Gastrocnemius medialis (tissue), 4 donors: ENCODE measurements at regions of chr16 and their contacts with region 1.

Region 1: DNA sequence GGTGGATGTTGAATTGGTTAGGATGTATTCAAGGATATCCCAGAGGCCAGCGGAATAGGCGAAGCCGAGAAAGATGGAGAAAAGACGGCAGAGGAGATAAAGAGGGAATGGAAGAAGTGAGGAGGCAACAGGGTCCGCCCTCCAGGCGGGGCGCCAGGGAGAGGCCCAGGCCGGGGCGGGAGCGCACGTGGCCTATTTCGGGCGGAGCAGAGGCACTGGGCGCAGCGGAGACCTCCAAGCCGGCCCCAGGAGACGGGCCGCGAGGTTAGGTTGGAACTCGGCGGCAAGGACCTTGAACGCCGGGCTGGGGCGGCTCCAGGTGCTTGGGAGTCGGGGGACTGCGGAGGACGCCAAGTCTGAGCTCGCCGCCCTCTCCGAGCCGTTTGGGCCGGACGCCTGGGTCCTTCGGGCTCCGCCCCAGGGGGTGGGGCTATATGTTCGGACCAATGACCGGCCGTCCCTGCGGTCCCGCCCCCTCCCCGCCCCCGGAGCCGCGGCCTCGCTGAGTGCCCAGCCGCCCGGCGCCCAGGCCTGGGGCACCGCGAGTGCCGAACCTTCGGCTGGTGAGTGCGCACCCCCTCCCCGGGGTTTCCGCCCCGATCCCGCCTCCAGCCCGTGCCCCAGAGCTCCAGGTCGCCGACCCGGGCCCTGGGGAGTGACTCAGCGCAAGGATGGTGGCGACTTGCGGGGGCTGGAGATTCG is at the start of gene ZNF771:
- DNase-seq: peak; percentile 84 to 90
- ATAC-seq: peak; percentile 91
- H3K4me3 ChIP-seq: peak within 1 kb of the TSS; percentile 59 to 98 (median 85)
- H3K27ac ChIP-seq: peak within 1 kb of the TSS; percentile 92 to 98 (median 94)
- H3K4me1 ChIP-seq: peaks cover 23 to 28% of the 10 kb centered on the region in 2 donors
- H3K27me3 ChIP-seq: no peaks in the 10 kb centered on the region
- CTCF ChIP-seq: no peak
- POLR2A ChIP-seq: peak; percentile 83 to 85
- total RNA-seq, gene ZNF771: 16.7 to 34.1 (median 24.7) TPM

Region 2: GRCh38 chr16:30112197-30113030 is 294.8 kb before region 1 on chr16:
- in situ Hi-C with region 1: loop called in 1 of 4 experiments (anchors 25 kb)
- intact Hi-C with region 1: no loop called
- DNase-seq: peak in 1 of 2 donors; percentile 32
- ATAC-seq: no peak
- H3K4me3 ChIP-seq: no peak overlapping the region
- H3K27ac ChIP-seq: no peak overlapping the region
- H3K4me1 ChIP-seq: no peaks in the 10 kb centered on the region
- H3K27me3 ChIP-seq: no peaks in the 10 kb centered on the region
- CTCF ChIP-seq: peak in 4 of 5 experiments; percentile 53 to 62 (median 58)
- POLR2A ChIP-seq: no peak

Region 3: DNA sequence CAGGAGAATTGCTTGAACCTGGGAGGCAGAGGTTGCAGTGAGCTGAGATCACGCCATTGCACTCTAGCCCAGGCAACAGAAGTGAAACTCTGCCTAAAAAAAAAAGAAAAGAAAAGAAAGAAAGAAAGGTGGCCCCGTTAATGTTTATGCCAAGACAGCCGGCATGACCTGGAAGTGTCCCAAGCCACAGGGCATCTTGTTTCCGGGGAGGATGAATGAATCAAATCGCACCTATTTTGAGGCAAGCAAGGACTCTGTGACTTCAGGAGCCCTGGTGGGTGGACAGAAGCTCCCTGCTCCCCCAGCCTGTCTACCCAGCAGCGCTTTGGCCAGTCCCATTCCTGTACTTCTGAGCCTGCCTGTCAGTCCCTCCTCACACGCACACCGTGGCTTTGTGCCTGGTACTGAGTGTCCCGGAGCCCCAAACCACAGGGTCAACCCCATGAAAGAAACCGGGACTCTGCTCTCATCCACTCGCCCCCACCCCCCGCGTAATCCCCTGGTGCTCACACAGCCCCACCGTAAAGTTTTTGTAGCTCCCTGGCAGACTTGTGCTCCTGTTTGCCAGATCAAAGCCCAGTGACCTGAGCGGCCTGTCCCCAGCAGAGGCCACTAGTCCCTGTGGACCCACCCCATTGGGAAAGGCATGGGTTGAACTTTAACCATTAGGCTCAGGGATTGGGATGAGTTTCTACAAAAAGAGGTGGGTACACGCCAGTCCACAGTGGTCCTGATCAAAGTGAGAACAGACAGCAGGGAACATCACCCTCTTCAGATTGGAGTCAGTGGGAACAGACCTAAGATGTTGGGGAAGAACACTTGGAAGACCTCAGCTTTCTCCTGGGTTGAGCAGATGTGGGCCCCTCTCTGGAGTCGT is 71.4 kb before region 1 on chr16:
- in situ Hi-C with region 1: no loop called
- intact Hi-C with region 1: loop called (anchors 2 kb)
- DNase-seq: peak; percentile 64 to 75
- ATAC-seq: peak; percentile 52 to 67
- H3K4me3 ChIP-seq: peak overlapping the region; percentile 66 to 85 (median 77)
- H3K27ac ChIP-seq: peak overlapping the region; percentile 89 to 99 (median 96)
- H3K4me1 ChIP-seq: peaks cover 5 to 32% of the 10 kb centered on the region in 2 donors
- H3K27me3 ChIP-seq: no peaks in the 10 kb centered on the region
- CTCF ChIP-seq: no peak
- POLR2A ChIP-seq: no peak

Region 4: DNA sequence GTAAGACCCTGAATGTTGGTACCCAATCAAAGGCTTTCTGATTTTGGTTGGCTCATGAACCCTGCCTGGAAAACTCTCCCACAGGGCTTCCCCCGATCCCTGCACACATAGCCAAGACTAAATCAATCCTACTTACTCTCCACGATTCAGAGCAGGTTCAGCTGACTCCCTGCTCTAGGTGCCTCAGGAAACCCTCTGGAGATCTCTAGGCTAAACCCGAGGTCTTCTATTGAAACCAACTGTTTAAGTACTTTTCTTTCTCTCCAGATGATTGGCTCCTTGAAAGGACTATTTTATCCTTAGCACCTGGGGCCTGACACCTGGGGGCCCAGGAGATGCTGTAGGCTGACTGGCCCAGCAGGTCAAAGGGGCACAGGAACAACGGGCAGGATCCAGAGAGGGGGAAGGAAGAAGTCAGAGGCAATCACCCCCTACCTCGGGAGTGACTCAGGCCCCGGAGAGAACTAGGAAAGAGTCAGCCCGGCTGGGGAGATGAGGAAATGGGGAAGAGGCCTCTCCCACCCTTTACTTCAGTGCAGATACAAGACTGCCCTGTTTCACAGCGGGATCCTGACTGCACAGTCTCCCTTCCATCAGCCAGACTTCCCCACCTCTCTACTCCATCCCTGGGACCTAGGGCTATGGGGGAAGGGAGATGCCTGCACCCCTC is 39.0 kb before region 1 on chr16:
- in situ Hi-C with region 1: no loop called
- intact Hi-C with region 1: no loop called
- DNase-seq: no peak
- ATAC-seq: no peak
- H3K4me3 ChIP-seq: peak overlapping the region; percentile 65 to 78 (median 74)
- H3K27ac ChIP-seq: peak overlapping the region; percentile 79 to 88 (median 88)
- H3K4me1 ChIP-seq: peaks cover 41 to 48% of the 10 kb centered on the region in 2 donors
- H3K27me3 ChIP-seq: no peaks in the 10 kb centered on the region
- CTCF ChIP-seq: no peak
- POLR2A ChIP-seq: no peak

Region 5: DNA sequence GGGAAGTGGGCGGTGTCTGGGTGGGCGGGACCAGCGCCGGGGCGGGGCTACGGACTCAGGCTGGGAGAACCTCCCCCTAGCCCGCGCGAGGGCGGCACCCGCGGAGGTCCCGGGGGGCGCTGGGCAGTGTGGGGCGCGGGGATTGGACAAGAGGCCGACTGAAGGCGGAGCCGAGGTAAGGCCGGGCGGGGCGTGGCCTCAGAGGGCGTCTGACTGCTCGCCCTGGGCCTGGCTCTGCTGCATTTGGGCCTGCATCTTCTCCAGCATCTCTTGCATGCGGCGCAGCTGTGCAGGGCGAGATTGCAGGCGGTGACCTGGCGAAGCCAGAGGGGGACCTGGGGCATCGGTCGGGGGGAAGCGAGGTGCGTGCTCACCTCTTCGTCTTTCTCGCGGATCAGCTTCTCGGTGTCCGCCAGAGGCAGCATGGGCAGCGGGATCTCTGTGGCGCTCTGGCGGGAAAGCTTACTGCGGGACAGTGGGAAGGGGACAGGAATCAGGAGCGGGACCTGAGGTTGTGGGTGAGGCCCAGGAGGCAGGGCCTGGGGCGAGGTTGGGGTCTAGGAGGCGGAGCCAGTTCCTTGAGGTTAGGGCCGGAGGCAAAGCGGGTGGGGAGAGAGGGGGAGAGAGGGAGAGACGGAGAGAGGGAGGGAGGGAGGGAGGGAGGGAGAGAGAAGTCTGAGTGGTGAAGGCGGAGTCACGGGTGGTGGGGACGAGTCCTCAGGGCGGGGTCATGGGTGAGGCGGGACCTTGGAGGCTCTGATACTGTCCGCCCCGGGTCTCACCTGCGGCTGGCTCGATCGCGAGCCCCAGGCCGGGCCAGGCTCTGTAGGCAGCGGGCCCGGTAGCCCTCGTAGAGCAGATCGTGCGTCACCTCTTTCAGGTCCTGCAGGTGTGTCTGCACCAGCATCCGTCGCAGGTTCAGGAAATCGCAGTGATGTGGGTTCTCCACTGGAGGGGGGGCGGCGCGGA is 28.7 kb before region 1 on chr16:
- in situ Hi-C with region 1: no loop called
- intact Hi-C with region 1: loop called (anchors 2 kb)
- DNase-seq: peak; percentile 97 to 99
- ATAC-seq: peak; percentile 78 to 86
- H3K4me3 ChIP-seq: peak overlapping the region; percentile 65 to 93 (median 80)
- H3K27ac ChIP-seq: peak overlapping the region; percentile 95 to 100 (median 98)
- H3K4me1 ChIP-seq: peaks cover 14 to 47% of the 10 kb centered on the region in 2 donors
- H3K27me3 ChIP-seq: no peaks in the 10 kb centered on the region
- CTCF ChIP-seq: peak in 1 of 5 experiments; percentile 11
- POLR2A ChIP-seq: peak in 1 of 2 donors; percentile 3

Region 6: DNA sequence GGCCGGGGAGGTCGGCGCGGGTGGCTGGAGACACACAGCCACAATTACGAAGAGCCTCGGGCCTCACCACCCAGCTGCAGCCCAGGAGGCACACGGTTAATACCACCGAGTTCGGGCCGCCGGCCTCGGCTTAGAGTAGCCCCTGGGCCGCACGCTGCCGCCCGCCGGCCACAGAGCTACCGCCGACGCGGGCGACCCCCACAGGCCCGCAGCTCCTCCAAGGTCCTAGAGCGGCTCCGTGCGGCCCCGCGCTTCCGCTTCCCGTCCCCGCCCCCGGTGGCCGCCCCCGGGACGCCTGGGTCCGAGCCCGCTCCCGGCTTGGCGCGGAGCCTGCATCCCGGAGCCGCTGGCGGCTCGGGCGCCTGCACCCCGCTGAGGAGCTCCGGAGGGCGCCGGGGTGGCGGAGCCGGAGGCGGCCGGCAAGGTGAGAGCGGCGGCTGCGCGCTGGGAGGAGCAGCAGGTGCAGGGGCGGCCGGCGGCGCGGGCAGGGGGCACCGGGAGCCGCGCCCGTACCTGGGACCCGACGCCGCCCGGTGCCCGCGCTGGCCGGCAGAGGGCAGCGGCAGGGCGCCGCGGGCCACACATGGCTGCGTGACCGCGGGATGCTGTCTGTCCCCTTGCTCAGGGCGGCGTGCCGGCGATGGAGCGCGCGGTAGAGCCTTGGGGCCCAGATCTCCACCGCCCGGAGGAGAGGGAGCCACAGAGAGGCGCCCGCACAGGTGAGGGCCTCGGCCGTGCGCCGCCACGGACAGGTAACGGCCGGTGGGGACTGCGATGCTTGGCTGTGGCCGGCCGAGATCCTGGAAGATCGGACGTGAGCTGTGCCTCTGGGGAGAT is 11.9 kb before region 1 on chr16 and contains the start of gene ZNF48:
- in situ Hi-C with region 1: no loop called
- intact Hi-C with region 1: loop called (anchors 1 kb)
- DNase-seq: peak; percentile 66 to 84
- ATAC-seq: peak; percentile 83 to 88
- H3K4me3 ChIP-seq: peak within 1 kb of the TSS; percentile 75 to 86 (median 79)
- H3K27ac ChIP-seq: peak within 1 kb of the TSS; percentile 77 to 88 (median 86)
- H3K4me1 ChIP-seq: peaks cover 12 to 22% of the 10 kb centered on the region in 2 donors
- H3K27me3 ChIP-seq: no peaks in the 10 kb centered on the region
- CTCF ChIP-seq: peak in 4 of 5 experiments; percentile 65 to 81 (median 74)
- POLR2A ChIP-seq: peak; percentile 54 to 62
- total RNA-seq, gene ZNF48: 4.4 to 12.7 (median 8.7) TPM